Stomach (tissue), 19 donors: ENCODE measurements at regions of chr15 and their contacts with region 1.

Region 1: GRCh38 chr15:76336254-76337058 is at the start of gene ISL2:
- DNase-seq: peak; percentile 67 to 95
- H3K4me3 ChIP-seq: peak within 1 kb of the TSS; percentile 42 to 63 (median 48)
- H3K27ac ChIP-seq: peak within 1 kb of the TSS; percentile 62 to 80 (median 74)
- H3K4me1 ChIP-seq: peaks cover 37 to 66% (median 56%) of the 10 kb centered on the region in 4 donors
- H3K27me3 ChIP-seq: peaks cover 15 to 88% (median 77%) of the 10 kb centered on the region in 3 donors
- CTCF ChIP-seq: no peak
- EP300 ChIP-seq: no peak
- POLR2A ChIP-seq: no peak
- total RNA-seq, gene ISL2: 1.3 to 4.0 (median 2.3) TPM in 3 of 5 donors, not detected in the others

Region 2: GRCh38 chr15:76190834-76191538 is 145.5 kb before region 1 on chr15:
- intact Hi-C with region 1: loop called (anchors 10 kb)
- DNase-seq: peak; percentile 91 to 93
- H3K4me3 ChIP-seq: peak overlapping the region; percentile 8 to 18 (median 14)
- H3K27ac ChIP-seq: peak overlapping the region; percentile 30 to 83 (median 63)
- H3K4me1 ChIP-seq: peaks cover 12 to 47% (median 33%) of the 10 kb centered on the region in 4 donors
- H3K27me3 ChIP-seq: peaks cover 0 to 65% (median 0%) of the 10 kb centered on the region in 3 donors
- CTCF ChIP-seq: peak in 5 of 7 experiments; percentile 75 to 92 (median 87)
- EP300 ChIP-seq: no peak
- POLR2A ChIP-seq: no peak